ENCODE measurements at regions of chr16 and their contacts with region 1.

Region 1: DNA sequence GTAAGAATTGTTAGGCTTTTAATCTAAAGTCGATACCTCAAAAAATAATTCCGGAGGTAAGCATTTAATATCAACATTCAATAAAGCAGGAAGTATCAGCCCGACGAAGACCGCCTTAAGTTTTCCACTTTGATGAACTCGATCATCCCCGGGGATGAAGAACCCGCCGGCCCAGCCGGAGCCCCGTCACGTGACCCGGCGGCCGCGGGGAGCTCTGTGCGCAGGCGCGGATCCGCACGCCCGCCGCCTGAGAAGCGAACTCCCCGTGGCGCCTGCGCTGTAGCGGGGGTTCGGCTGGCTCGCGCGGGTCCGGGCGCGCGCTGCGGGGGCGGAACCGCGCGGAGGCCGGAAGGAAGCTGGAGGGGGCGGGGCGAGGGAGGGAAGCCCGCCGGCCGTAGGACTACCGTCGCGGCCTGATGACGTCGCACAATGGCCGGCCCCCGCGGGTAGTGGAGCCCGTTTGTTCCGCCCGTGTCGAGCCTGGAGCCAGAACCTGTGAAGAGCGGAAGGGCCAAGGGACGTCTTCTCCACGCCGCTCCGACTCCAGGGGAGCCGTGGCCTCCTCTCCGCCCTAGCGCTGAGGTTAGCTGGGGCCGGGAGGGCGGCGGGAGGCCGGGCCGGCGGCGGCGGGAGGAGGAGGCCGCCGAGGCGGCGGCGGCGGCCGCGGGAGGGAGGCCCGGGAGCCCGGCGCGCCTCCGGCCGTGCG is at the start of gene ZC3H18:
- DNase-seq: peak; percentile 92
- ATAC-seq: peak; percentile 95
- H3K4me3 ChIP-seq: peak within 1 kb of the TSS; percentile 98
- H3K27ac ChIP-seq: peak within 1 kb of the TSS; percentile 100
- H3K4me1 ChIP-seq: peaks cover 8% of the 10 kb centered on the region
- H3K27me3 ChIP-seq: no peaks in the 10 kb centered on the region
- CTCF ChIP-seq: no peak
- POLR2A ChIP-seq: peak; percentile 83
- RAD21 ChIP-seq: no peak
- total RNA-seq, gene ZC3H18: 3.4 and 4.2 TPM in 2 replicates

Region 2: DNA sequence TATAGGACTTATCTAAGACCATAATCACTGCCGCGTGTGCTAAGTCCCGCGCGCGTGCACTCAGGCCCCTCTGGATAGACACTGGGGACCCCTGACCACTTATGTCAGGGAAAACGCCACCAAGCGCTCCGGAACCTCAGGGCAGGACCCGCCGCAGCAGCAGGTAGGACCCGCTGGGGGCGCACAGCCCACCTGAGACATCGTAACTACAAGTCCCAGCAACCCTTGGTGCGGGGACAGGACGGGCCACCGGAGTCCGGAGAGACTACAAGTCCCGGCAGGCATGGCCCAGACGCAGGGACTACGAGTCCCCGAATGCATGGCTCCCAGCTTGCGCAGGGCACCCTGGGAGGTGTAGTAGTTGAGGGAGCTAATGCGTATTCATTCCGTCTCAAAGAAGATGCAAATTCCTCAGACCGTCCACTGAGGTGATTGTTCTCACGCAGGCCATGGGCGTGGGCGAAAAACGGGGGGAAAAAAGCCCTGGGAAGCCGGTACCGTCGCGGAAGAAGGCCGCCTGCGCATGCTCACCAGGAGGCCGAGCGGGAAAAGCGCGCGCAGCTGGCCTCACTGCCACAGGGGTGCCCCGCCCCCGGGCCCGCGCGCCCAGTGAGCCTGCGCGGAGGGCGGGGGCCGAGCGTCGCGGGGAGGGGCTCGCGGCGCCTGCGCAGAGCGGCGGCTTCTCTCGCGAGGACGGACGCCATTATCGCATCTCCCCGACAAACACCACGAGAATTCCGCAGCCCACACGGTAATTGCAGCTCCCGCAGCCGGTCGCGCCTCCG is 619.2 kb before region 1 on chr16 and contains the start of gene BANP:
- CTCF ChIA-PET with region 1: no interaction called
- POLR2A ChIA-PET with region 1: no interaction called
- dilution Hi-C with region 1: no loop called
- in situ Hi-C with region 1: no loop called
- intact Hi-C with region 1: loop called (anchors 10 kb)
- DNase-seq: peak; percentile 98
- ATAC-seq: peak; percentile 94
- H3K4me3 ChIP-seq: peak within 1 kb of the TSS; percentile 74
- H3K27ac ChIP-seq: peak within 1 kb of the TSS; percentile 94
- H3K4me1 ChIP-seq: peaks cover 11% of the 10 kb centered on the region
- H3K27me3 ChIP-seq: no peaks in the 10 kb centered on the region
- CTCF ChIP-seq: peak; percentile 24; the same call in 1 of the 2 replicates
- POLR2A ChIP-seq: no peak
- RAD21 ChIP-seq: 0 out of 2 replicates have a peak, but pooled peaks have one; percentile 1
- total RNA-seq, gene BANP: 16.9 and 17.4 TPM in 2 replicates

Region 3: DNA sequence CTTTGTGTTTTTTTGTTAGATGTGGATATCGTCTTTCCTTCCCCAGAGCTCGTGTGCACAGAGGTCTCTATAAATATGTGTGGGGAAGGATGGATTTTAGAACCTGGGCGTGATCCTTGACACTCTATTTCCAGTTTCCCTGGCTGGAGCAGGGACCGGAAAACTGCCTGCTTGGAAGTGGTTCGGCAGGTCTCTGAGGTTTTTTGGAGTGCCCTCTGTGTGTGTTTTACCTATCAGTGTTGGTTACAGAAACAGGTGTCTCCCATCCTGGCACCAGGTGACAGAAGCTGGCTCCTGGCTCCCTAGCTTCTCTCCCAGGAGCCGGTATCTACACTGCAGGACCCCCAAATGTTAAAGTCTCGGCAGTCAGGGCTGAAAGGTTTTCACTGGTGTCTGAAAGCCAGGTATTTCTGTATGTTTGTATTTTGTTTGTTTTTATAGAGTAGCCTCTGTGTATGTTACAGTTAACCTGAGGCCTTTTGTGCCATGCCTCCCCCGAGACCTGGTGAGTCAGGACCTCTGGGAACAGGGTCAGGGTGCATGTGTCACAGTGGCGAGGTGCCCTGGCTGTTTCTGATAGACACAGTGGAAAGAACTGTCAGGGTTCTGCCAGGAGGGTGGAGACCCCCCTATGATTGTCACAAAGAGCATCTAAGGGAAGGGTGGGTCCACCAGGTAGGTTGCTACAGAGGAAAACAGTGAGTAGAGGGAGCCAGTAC is 31.3 kb after region 1 on chr16:
- CTCF ChIA-PET with region 1: no interaction called
- POLR2A ChIA-PET with region 1: no interaction called
- dilution Hi-C with region 1: no loop called
- in situ Hi-C with region 1: no loop called
- intact Hi-C with region 1: loop called (anchors 2 kb)
- DNase-seq: no peak
- ATAC-seq: no peak
- H3K4me3 ChIP-seq: no peak overlapping the region
- H3K27ac ChIP-seq: no peak overlapping the region
- H3K4me1 ChIP-seq: no peaks in the 10 kb centered on the region
- H3K27me3 ChIP-seq: no peaks in the 10 kb centered on the region
- CTCF ChIP-seq: no peak
- POLR2A ChIP-seq: no peak
- RAD21 ChIP-seq: no peak

Measured in IMR-90 (cell line).